Activated B cell treated with CpG ODN at 0.5 μM for 24 hours (primary cell): ENCODE measurements at regions of chr5 and their contacts with region 1.

Region 1: DNA sequence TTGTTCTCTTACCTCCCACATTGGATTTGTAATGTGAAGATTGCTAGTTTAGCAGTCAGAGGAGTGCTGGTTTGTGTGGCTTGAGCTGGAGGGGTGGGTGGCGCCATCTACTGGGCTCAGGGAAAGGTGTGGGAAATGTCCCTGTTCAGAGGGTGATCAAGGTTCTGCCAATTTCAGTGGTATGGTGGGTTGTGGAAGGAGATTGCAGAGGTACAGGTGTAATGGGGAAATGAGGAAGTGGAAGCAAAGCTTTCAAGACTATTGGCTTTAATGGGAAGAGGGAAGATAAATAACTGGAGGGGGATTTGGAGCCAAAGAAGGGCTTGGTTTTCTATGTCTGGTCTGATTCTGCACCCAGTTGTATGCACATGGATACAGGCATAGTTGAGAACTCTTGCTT is 76.4 kb downstream of the OSMR start:
- DNase-seq: no peak
- ATAC-seq: no peak
- H3K4me3 Mint-ChIP-seq: no peak overlapping the region
- H3K27ac Mint-ChIP-seq: no peak overlapping the region
- H3K4me1 Mint-ChIP-seq: no peaks in the 10 kb centered on the region
- H3K27me3 Mint-ChIP-seq: peaks cover 25% of the 10 kb centered on the region
- CTCF ChIP-seq: no peak

Region 2: GRCh38 chr5:38382898-38383297 is 539.3 kb before region 1 on chr5:
- CTCF ChIA-PET with region 1: no interaction called
- POLR2A ChIA-PET with region 1: no interaction called
- intact Hi-C with region 1: loop called (anchors 2 kb)
- DNase-seq: no peak
- ATAC-seq: peak; percentile 34
- H3K4me3 Mint-ChIP-seq: no peak overlapping the region
- H3K27ac Mint-ChIP-seq: no peak overlapping the region
- H3K4me1 Mint-ChIP-seq: no peaks in the 10 kb centered on the region
- H3K27me3 Mint-ChIP-seq: peaks cover 20% of the 10 kb centered on the region
- CTCF ChIP-seq: no peak

Region 3: GRCh38 chr5:38948501-38948900 is 26.3 kb after region 1 on chr5:
- CTCF ChIA-PET with region 1: no interaction called
- POLR2A ChIA-PET with region 1: no interaction called
- intact Hi-C with region 1: no loop called
- DNase-seq: no peak
- ATAC-seq: no peak
- H3K4me3 Mint-ChIP-seq: no peak overlapping the region
- H3K27ac Mint-ChIP-seq: no peak overlapping the region
- H3K4me1 Mint-ChIP-seq: no peaks in the 10 kb centered on the region
- H3K27me3 Mint-ChIP-seq: no peaks in the 10 kb centered on the region
- CTCF ChIP-seq: no peak